Left ventricle myocardium superior (tissue), 1 donor: ENCODE measurements at regions of chr22 and their contacts with region 1.

Region 1: DNA sequence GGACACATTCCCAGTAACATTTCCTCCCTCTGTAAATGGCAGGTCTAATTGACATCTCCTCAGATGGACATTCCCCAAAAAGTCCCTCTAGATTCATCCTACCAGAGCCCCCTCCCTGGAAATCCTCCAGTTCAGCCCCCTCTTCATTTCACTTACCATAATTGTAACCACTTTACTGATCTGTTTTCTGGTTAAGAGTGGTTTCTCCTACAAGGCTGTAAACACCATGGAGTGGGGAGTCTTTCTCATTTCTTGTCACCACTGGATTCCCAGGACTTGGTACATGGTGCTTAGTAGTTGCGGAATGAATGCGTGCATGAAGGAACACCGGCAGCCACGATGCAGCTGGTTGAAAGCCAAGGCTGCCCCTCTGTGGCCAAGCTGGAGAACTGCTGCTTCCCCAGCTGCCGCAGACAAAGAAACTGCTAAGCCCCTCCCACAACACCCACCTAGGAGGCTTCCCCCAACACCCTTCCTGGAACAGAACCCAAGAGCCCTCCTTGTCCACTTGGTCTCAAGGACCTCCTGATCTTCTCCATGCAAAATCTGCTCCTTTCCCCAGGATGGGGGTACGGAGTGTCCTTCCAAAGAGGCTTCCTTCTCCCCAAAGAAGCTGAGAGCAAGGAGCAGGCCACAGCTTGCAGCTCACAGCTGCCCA is 18.6 kb upstream of the SCARF2 start:
- DNase-seq: peak; percentile 78
- ATAC-seq: peak; percentile 90

Region 2: GRCh38 chr22:20418211-20418788 is 37.9 kb before region 1 on chr22:
- intact Hi-C with region 1: loop called (anchors 5 kb)
- DNase-seq: peak; percentile 91
- ATAC-seq: peak; percentile 92

Region 3: DNA sequence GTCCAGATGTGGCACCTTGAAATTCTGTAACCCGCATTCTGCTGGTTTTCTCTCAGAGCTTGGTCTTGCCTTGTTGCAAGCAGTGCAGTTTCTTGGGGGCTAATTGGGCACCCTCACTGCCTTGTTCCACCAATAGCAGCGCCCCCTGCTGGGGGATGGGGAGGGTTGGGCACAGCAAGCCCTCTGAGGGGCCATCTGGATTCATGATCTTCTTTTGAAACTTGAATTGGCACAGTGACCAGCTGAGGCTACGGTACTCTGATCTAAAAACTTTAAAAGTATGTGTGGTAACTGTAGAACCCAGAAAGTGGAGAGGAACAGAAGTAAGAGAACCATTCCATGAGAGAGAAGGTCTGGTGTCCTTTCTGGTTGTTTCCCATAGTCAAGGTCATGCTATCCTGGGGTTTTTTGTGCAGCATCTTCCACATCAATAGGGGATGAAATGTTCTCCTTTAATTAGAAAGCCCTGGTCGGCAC is 115.4 kb after region 1 on chr22:
- intact Hi-C with region 1: no loop called
- DNase-seq: peak; percentile 63
- ATAC-seq: no peak